RWPE1 (cell line): ENCODE measurements at regions of chr14 and their contacts with region 1.

Region 1: DNA sequence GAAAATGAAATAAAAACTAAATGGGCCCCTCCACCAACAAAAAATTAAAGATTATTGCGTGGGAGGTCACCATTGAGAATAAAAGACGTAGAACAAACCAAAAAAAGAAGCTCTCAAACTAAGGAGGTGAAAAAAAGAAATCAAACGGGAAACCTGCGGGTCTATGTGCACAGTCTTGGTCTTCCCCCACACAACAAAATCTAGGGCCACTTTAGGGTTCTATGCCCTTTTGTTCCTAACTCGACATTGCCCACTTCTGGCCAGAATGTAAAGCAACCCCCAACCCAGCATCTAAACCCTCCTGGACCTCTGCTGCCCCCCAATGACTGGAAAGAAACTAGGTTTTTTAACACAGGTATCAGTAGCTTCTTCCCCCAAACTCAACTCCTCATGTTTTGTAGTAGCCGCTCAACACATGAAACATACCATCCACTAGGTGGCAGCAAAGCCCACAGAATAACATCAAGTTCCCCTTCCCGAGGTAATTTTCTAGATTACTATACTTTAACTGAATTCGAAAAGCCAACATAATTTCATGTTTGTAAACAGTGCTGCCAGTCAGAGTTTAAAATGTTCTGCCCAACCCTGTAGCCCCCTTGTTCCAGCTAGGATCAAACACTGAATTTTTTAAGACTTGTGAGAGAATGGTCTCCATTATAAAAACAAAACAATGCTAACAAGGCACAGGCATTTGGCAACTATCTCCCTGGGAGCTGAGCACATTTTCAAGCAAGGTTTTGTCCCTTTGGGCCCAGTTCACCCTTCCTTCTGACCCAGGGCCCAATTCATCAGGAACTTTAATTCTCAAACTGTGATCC is 18.7 kb downstream of the DAD1 start:
- DNase-seq: peak; percentile 64
- H3K27ac ChIP-seq: peak overlapping the region; percentile 64
- CTCF ChIP-seq: peak; percentile 76

Region 2: DNA sequence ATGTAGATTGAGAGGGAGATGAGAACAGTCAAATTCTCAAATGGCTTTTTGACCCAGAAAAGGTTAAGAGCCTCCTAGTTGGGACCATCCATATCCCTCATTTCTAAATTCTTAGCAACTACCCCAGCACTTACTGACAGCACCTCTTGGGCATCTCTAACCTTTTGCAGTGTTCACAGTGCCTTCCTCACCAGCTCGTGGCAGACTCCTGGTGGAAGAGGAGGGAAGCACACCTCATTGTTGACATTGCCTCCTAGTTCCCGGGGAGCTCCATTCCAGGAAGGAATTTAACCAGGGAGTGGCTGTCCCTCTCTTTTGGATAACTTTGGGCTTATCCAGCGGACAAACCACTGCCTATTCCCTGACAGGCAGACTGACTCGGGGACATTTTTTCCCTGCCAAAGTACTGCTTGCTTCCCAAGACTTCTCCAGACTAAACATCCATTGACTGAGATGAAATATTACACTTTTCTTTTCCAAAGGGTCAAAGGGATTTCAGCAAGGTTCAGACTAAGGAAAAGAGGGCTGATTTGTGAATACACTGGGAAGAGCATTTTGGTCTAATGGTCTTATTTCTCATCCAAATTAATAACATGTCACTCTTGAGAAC is 82.8 kb after region 1 on chr14:
- CTCF ChIA-PET with region 1: interaction called, 44 read pairs
- POLR2A ChIA-PET with region 1: no interaction called
- DNase-seq: peak; percentile 78
- H3K27ac ChIP-seq: no peak overlapping the region
- CTCF ChIP-seq: peak; percentile 84